ENCODE measurements at regions of chr17 and their contacts with region 1.

Region 1: DNA sequence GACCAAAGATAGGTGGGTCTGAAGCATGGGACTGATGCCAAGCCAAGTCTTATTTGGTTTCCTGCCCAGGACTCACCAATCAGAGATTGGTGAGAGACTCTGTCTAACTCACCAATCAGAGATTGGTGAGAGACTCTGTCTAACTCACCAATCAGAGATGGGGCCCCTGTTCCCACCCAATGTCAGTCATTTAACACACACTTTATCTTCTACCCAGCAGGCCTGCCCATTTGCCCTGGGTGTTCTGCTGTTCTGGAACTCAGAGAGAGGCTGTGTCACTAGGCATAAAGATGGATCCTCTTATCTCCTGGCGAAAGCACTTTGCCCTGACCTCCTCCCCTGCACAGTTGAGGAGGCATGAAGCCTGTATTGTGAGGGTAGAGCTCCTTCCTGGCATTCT is 5.4 kb upstream of the RHOT1 start:
- DNase-seq: no peak
- H3K4me3 ChIP-seq: no peak overlapping the region
- H3K27ac ChIP-seq: no peak overlapping the region
- H3K4me1 ChIP-seq: peaks cover 3 to 36% (median 17%) of the 10 kb centered on the region in 6 donors
- H3K27me3 ChIP-seq: no peaks in the 10 kb centered on the region
- CTCF ChIP-seq: no peak
- POLR2A ChIP-seq: no peak

Region 2: DNA sequence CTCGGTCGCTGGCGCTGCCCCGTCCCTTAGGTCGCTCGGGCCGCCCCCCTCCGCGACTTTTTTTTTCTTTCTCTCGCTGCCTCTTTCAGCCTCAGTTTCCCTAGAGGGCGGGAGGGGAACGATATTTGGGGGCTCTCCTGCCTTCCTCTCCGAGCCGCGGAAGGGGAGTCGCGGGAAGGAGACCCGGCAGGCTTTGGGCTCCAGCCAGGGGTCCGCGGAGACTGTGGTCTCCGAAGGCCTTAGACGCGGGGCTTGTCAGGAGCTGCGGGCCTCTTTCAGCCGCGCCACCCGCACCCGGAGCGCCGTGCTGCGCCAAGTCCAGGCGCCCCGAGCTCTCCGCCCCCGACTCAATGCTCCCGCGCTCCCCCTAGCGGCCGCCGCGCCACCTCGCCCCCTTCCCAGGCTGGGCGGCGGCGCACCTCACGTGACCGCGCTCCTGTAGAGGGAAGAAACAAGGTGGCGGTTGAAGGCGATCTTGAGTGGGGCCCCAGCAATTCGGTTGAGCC is 129.8 kb before region 1 on chr17 and contains the start of gene LRRC37B:
- intact Hi-C with region 1: loop called (anchors 10 kb)
- DNase-seq: peak; percentile 98
- H3K4me3 ChIP-seq: peak within 1 kb of the TSS; percentile 62 to 97 (median 82)
- H3K27ac ChIP-seq: peak within 1 kb of the TSS; percentile 60 to 96 (median 88)
- H3K4me1 ChIP-seq: peaks cover 20 to 58% (median 37%) of the 10 kb centered on the region in 6 donors
- H3K27me3 ChIP-seq: no peaks in the 10 kb centered on the region
- CTCF ChIP-seq: peak; percentile 92 to 100 (median 99)
- POLR2A ChIP-seq: no peak
- total RNA-seq, gene LRRC37B: 19.7 to 53.1 (median 30.9) TPM

Measured in spleen (tissue), 13 donors.